ENCODE measurements at regions of chr3 and their contacts with region 1.

Region 1: GRCh38 chr3:71875461-71875947 is 90.6 kb upstream of the PROK2 start:
- DNase-seq: peak; percentile 55 to 81 (median 73)
- ATAC-seq: peak; percentile 98
- H3K4me3 ChIP-seq: no peak overlapping the region
- H3K4me3 Mint-ChIP-seq: no peak overlapping the region
- H3K27ac ChIP-seq: no peak overlapping the region
- H3K27ac Mint-ChIP-seq: no peak overlapping the region
- H3K4me1 ChIP-seq: no peaks in the 10 kb centered on the region
- H3K4me1 Mint-ChIP-seq: peaks cover 0 to 20% (median 10%) of the 10 kb centered on the region in 7 donors
- H3K27me3 ChIP-seq: no peaks in the 10 kb centered on the region
- H3K27me3 Mint-ChIP-seq: peaks cover 0 to 4% (median 0%) of the 10 kb centered on the region in 5 donors

Region 2: DNA sequence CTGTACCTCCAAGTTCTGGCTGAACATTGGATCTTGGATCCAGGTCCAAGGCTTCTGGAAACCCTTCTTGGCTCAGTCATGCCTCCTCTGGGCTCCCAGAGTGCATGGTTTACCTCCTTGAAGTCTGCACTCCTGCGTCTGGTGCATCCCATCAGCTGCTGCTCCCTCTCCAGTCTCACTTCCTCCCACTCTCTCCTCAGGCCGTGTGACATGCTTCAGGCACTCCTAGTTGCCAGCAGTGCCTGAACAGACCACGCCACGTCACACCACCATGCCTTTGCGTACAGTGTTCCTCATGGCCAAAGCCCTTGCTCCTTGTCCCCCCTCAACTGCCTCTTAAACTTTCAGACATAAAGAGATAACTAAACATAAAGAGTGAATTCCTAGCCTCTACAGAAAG is 116.1 kb before region 1 on chr3:
- CTCF ChIA-PET with region 1: no interaction called
- POLR2A ChIA-PET with region 1: no interaction called
- intact Hi-C with region 1: no loop called
- DNase-seq: no peak
- ATAC-seq: peak; percentile 75
- H3K4me3 ChIP-seq: no peak overlapping the region
- H3K4me3 Mint-ChIP-seq: peak overlapping the region in 1 of 10 donors; percentile 39
- H3K27ac ChIP-seq: no peak overlapping the region
- H3K27ac Mint-ChIP-seq: no peak overlapping the region
- H3K4me1 ChIP-seq: no peaks in the 10 kb centered on the region
- H3K4me1 Mint-ChIP-seq: peaks cover 0 to 8% (median 6%) of the 10 kb centered on the region in 7 donors
- H3K27me3 ChIP-seq: no peaks in the 10 kb centered on the region
- H3K27me3 Mint-ChIP-seq: peaks cover 11 to 74% (median 32%) of the 10 kb centered on the region in 5 donors

Region 3: GRCh38 chr3:71859123-71859519 is 16.4 kb before region 1 on chr3:
- CTCF ChIA-PET with region 1: no interaction called
- POLR2A ChIA-PET with region 1: no interaction called
- intact Hi-C with region 1: no loop called
- DNase-seq: peak in 5 of 9 donors; percentile 25 to 61 (median 47)
- ATAC-seq: peak; percentile 91
- H3K4me3 ChIP-seq: no peak overlapping the region
- H3K4me3 Mint-ChIP-seq: no peak overlapping the region
- H3K27ac ChIP-seq: no peak overlapping the region
- H3K27ac Mint-ChIP-seq: no peak overlapping the region
- H3K4me1 ChIP-seq: peaks cover 0 to 3% of the 10 kb centered on the region in 2 donors
- H3K4me1 Mint-ChIP-seq: peaks cover 0 to 8% (median 5%) of the 10 kb centered on the region in 7 donors
- H3K27me3 ChIP-seq: no peaks in the 10 kb centered on the region
- H3K27me3 Mint-ChIP-seq: peaks cover 22 to 32% (median 29%) of the 10 kb centered on the region in 5 donors

Region 4: GRCh38 chr3:71931922-71932321 is 56.4 kb after region 1 on chr3:
- CTCF ChIA-PET with region 1: no interaction called
- POLR2A ChIA-PET with region 1: no interaction called
- intact Hi-C with region 1: no loop called
- DNase-seq: no peak
- ATAC-seq: no peak
- H3K4me3 ChIP-seq: no peak overlapping the region
- H3K4me3 Mint-ChIP-seq: no peak overlapping the region
- H3K27ac ChIP-seq: no peak overlapping the region
- H3K27ac Mint-ChIP-seq: no peak overlapping the region
- H3K4me1 ChIP-seq: no peaks in the 10 kb centered on the region
- H3K4me1 Mint-ChIP-seq: no peaks in the 10 kb centered on the region
- H3K27me3 ChIP-seq: no peaks in the 10 kb centered on the region
- H3K27me3 Mint-ChIP-seq: peaks cover 0 to 10% (median 0%) of the 10 kb centered on the region in 5 donors

Region 5: DNA sequence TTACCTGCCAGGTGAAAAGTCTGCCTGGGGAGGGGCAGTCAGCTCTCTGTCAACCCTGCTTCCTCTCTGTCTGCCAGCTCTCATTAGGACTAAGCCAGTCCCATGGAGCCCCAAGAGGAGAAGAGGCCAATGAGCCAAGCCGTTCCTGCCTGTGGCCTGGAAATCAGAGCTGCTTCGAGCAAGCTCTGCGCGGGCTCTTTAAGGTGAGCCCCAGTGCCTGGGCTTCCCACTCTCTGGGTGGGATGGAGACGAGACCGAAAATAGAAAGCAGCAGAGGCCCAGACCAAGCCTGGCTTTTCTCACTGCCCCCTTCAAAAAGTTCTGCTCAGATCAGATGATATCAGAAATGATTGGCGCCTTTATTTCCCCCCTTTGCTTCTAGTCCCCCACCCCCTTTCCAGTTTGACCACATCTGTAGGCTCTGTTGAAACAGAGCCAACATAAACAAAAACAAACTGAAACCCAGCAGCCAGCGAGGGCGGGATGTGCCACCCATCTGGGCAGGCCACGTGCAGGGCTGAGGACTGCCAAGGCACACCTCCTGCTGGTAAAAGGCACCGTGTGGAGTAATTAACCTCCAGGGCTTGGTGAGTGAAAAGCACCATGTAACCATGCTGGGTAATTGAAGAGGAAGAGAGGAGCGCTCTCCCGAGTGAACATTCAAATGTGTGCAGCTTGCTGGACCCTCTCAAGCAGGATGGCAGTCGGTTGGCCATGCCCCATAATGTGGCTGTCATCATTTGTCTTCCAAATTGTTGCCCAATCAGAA is 380.5 kb after region 1 on chr3:
- CTCF ChIA-PET with region 1: interaction called, 3 read pairs
- POLR2A ChIA-PET with region 1: no interaction called
- intact Hi-C with region 1: loop called in 1 of 2 experiments (anchors 10 kb)
- DNase-seq: peak in 7 of 9 donors; percentile 33 to 63 (median 53)
- ATAC-seq: peak; percentile 80
- H3K4me3 ChIP-seq: no peak overlapping the region
- H3K4me3 Mint-ChIP-seq: peak overlapping the region in 9 of 10 donors; percentile 41 to 76 (median 68)
- H3K27ac ChIP-seq: no peak overlapping the region
- H3K27ac Mint-ChIP-seq: peak overlapping the region in 8 of 9 donors; percentile 32 to 90 (median 82)
- H3K4me1 ChIP-seq: peaks cover 0 to 45% of the 10 kb centered on the region in 2 donors
- H3K4me1 Mint-ChIP-seq: peaks cover 21 to 62% (median 53%) of the 10 kb centered on the region in 7 donors
- H3K27me3 ChIP-seq: no peaks in the 10 kb centered on the region
- H3K27me3 Mint-ChIP-seq: peaks cover 0 to 8% (median 0%) of the 10 kb centered on the region in 5 donors

Region 6: GRCh38 chr3:72347819-72348319 is 472.4 kb after region 1 on chr3:
- CTCF ChIA-PET with region 1: no interaction called
- POLR2A ChIA-PET with region 1: no interaction called
- intact Hi-C with region 1: loop called in 1 of 2 experiments (anchors 10 kb)
- DNase-seq: peak in 5 of 9 donors; percentile 37 to 44 (median 41)
- ATAC-seq: peak; percentile 44
- H3K4me3 ChIP-seq: no peak overlapping the region
- H3K4me3 Mint-ChIP-seq: peak overlapping the region in 7 of 10 donors; percentile 11 to 71 (median 60)
- H3K27ac ChIP-seq: peak overlapping the region; percentile 22
- H3K27ac Mint-ChIP-seq: peak overlapping the region in 8 of 9 donors; percentile 70 to 90 (median 86)
- H3K4me1 ChIP-seq: peaks cover 3 to 63% of the 10 kb centered on the region in 2 donors
- H3K4me1 Mint-ChIP-seq: peaks cover 37 to 69% (median 64%) of the 10 kb centered on the region in 7 donors
- H3K27me3 ChIP-seq: no peaks in the 10 kb centered on the region
- H3K27me3 Mint-ChIP-seq: peaks cover 0 to 12% (median 0%) of the 10 kb centered on the region in 5 donors

Region 7: DNA sequence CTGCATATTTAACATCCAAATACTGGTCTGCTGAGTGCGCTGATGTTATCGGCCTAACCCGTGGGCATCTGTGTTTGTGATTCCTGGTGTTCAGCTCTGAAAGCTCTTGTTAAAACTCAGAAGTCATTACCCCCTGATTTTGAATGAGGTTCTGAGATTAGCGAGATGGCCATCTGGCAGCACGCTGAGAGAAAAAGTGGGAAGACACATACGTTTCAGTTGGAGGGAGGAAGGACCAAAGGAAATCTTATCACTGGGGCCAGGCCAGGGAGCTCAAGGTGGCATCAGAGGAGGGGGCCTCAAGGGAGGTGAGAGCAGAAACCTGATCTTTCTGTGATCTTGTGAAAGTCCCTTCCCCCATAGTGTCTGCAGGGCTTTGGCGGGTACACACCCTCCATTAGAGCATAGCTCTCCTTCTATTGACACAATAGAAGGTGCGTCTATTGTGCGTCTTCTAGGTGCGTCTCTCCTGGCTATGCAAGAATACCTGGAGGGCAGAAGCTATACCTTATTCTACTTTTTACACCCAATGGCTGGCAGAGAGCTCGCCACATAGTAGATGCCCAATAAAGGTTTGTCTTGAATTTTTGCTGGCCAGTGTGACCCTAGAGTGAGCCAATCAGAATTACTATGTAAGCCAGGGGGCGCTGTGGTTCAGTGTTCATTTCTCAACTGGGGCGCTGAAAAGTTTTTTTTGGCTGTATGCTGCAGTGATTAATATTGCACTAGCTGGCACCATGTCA is 790.4 kb after region 1 on chr3:
- CTCF ChIA-PET with region 1: interaction called, 14 read pairs
- POLR2A ChIA-PET with region 1: interaction called, 4 read pairs
- intact Hi-C with region 1: loop called (anchors 1 kb)
- DNase-seq: peak; percentile 34 to 80 (median 59)
- ATAC-seq: peak; percentile 73
- H3K4me3 ChIP-seq: no peak overlapping the region
- H3K4me3 Mint-ChIP-seq: no peak overlapping the region
- H3K27ac ChIP-seq: no peak overlapping the region
- H3K27ac Mint-ChIP-seq: peak overlapping the region in 1 of 9 donors; percentile 59
- H3K4me1 ChIP-seq: peaks cover 0 to 4% of the 10 kb centered on the region in 2 donors
- H3K4me1 Mint-ChIP-seq: no peaks in the 10 kb centered on the region
- H3K27me3 ChIP-seq: no peaks in the 10 kb centered on the region
- H3K27me3 Mint-ChIP-seq: no peaks in the 10 kb centered on the region

Region 8: GRCh38 chr3:73086071-73086494 is 1210.6 kb after region 1 on chr3:
- CTCF ChIA-PET with region 1: no interaction called
- POLR2A ChIA-PET with region 1: no interaction called
- intact Hi-C with region 1: loop called (anchors 1 kb)
- DNase-seq: peak; percentile 16 to 56 (median 43)
- ATAC-seq: peak; percentile 82
- H3K4me3 ChIP-seq: peak overlapping the region; percentile 11
- H3K4me3 Mint-ChIP-seq: peak overlapping the region in 8 of 10 donors; percentile 25 to 70 (median 57)
- H3K27ac ChIP-seq: no peak overlapping the region
- H3K27ac Mint-ChIP-seq: peak overlapping the region in 1 of 9 donors; percentile 42
- H3K4me1 ChIP-seq: peaks cover 0 to 8% of the 10 kb centered on the region in 2 donors
- H3K4me1 Mint-ChIP-seq: peaks cover 0 to 9% (median 7%) of the 10 kb centered on the region in 7 donors
- H3K27me3 ChIP-seq: no peaks in the 10 kb centered on the region
- H3K27me3 Mint-ChIP-seq: peaks cover 0 to 3% (median 0%) of the 10 kb centered on the region in 5 donors

Measured in naive thymus-derived CD4-positive, alpha-beta T cell (primary cell).